HCT116 (cell line): ENCODE measurements at regions of chr10 and their contacts with region 1.

Region 1: GRCh38 chr10:69716711-69717560 is 84.8 kb upstream of the COL13A1 start:
- DNase-seq: peak; percentile 51
- ATAC-seq: peak; percentile 99
- H3K4me3 ChIP-seq: no peak overlapping the region
- H3K27ac ChIP-seq: no peak overlapping the region
- H3K4me1 ChIP-seq: no peaks in the 10 kb centered on the region; a peak in 2 of 4 replicates
- H3K27me3 ChIP-seq: no peaks in the 10 kb centered on the region
- CTCF ChIP-seq: peak; percentile 83 to 93 (median 86)
- POLR2A ChIP-seq: no peak
- RAD21 ChIP-seq: peak; percentile 91

Region 2: GRCh38 chr10:69425511-69426298 is 291.2 kb before region 1 on chr10:
- CTCF ChIA-PET with region 1: no interaction called
- POLR2A ChIA-PET with region 1: no interaction called
- RAD21 ChIA-PET with region 1: no interaction called
- intact Hi-C with region 1: loop called (anchors 10 kb)
- DNase-seq: no peak
- ATAC-seq: no peak
- H3K4me3 ChIP-seq: no peak overlapping the region
- H3K27ac ChIP-seq: no peak overlapping the region
- H3K4me1 ChIP-seq: peaks cover 0 to 15% of the 10 kb centered on the region in 2 experiments; a peak in 1 of 4 replicates
- H3K27me3 ChIP-seq: no peaks in the 10 kb centered on the region
- CTCF ChIP-seq: no peak
- POLR2A ChIP-seq: no peak
- RAD21 ChIP-seq: no peak

Region 3: DNA sequence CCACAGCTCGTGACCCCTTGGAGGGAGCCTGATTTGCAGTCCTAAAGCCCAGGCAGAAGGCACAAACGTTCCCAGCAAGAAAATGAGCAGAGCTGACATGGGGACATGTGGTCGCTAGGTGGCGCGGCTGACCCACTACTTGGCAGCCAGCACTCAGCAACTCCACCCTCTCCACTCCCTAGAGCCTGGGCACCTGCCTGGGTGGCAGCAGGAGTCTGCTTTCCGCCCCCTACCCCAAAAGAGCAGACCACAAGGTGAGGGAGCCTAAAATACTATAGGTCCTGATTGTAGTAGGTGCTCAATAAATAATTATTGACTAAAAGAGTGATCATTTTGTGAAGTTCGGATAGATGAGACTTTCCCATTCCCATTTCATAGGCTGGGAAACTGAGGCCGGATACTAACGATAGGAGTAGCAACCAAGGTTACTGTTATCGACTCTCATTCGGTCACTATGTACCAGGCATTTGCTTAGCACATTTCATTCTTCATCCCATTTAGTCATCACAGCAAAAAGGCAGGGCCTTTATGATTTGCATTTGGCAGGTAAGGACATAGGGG is 201.2 kb before region 1 on chr10:
- CTCF ChIA-PET with region 1: interaction called, 15 read pairs
- POLR2A ChIA-PET with region 1: no interaction called
- RAD21 ChIA-PET with region 1: no interaction called
- intact Hi-C with region 1: loop called (anchors 1 kb)
- DNase-seq: peak; percentile 47
- ATAC-seq: peak; percentile 96
- H3K4me3 ChIP-seq: no peak overlapping the region
- H3K27ac ChIP-seq: no peak overlapping the region
- H3K4me1 ChIP-seq: no peaks in the 10 kb centered on the region
- H3K27me3 ChIP-seq: no peaks in the 10 kb centered on the region
- CTCF ChIP-seq: peak; percentile 89 to 94 (median 89)
- POLR2A ChIP-seq: no peak
- RAD21 ChIP-seq: peak; percentile 93

Region 4: DNA sequence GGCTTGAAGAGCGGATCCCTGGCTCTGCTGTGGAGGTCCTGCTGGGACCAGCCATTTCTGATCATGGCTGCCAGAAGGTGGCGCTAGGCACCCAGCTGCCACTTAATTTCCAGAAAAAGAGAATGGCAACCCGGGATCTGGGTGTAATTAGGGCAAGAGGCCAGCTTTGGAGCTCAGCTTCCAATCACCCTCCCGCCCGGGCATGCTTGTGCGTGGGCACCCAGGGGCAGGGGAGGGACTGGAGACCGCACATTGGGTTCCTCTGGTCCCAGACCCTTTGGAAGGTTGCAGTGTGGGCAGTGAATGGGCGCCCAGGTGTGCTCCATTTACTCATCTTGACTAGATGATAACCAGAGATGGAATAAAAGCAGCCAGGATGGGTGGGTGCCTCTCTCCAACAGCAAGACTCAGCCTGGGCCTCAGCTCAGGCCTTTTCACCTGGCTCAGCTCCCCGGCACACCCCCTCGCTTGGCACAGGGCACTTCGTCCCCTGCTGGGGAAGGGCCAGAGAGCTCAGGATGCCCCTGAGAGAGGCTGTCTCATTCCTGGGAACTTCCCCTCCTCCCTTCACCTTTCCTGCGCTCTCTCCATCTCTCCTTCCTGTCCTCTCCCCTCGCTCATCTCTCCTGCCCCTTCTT is 72.2 kb before region 1 on chr10:
- CTCF ChIA-PET with region 1: interaction called, 102 read pairs
- POLR2A ChIA-PET with region 1: no interaction called
- RAD21 ChIA-PET with region 1: interaction called, 3 read pairs
- intact Hi-C with region 1: loop called (anchors 1 kb)
- DNase-seq: peak; percentile 35
- ATAC-seq: peak; percentile 84
- H3K4me3 ChIP-seq: no peak overlapping the region
- H3K27ac ChIP-seq: no peak overlapping the region
- H3K4me1 ChIP-seq: peaks cover 4 to 10% of the 10 kb centered on the region in 2 experiments
- H3K27me3 ChIP-seq: no peaks in the 10 kb centered on the region
- CTCF ChIP-seq: peak; percentile 85 to 93 (median 91)
- POLR2A ChIP-seq: no peak
- RAD21 ChIP-seq: peak; percentile 95

Region 5: DNA sequence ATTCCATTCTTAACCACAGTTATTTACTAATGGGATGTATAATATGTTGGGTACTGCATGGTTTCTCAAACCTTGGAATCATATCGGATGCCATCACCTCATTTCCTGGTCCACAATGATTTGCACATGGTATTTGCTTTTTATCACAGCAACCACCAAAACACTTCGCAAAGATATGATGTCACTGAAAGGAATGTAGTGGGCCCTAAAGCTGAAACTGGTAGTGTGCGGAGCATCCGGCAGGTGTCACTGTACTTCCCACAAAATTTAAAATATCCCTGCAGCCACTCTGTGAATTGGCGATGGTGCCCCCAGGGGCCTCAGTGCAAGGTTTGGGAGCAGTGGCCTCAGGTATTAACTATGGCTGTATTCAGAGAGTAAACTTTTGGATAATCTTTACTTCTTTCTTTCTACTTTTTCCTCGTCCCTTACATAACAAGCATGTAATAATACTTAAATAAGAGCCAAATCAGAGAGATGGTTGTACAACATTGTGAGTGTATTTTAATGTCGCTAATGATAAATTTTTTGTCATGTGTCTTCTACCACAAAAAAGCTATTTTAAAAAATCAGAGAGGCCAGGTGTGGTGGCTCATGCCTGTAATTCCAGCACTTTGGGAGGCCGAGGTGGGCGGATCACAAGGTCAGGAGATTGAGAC is 20.7 kb before region 1 on chr10:
- CTCF ChIA-PET with region 1: interaction called, 5 read pairs
- POLR2A ChIA-PET with region 1: no interaction called
- RAD21 ChIA-PET with region 1: interaction called in 1 of 2 experiments, 3 read pairs
- intact Hi-C with region 1: loop called (anchors 2 kb)
- DNase-seq: peak; percentile 69
- ATAC-seq: peak; percentile 97
- H3K4me3 ChIP-seq: no peak overlapping the region
- H3K27ac ChIP-seq: no peak overlapping the region
- H3K4me1 ChIP-seq: peaks cover 0 to 9% of the 10 kb centered on the region in 2 experiments; a peak in 3 of 4 replicates
- H3K27me3 ChIP-seq: peaks cover 6% of the 10 kb centered on the region; the same call in 1 of the 2 replicates
- CTCF ChIP-seq: peak; percentile 74 to 86 (median 74)
- POLR2A ChIP-seq: no peak
- RAD21 ChIP-seq: peak; percentile 55